Sigmoid colon (tissue), 7 donors: ENCODE measurements at regions of chr10 and their contacts with region 1.

Region 1: DNA sequence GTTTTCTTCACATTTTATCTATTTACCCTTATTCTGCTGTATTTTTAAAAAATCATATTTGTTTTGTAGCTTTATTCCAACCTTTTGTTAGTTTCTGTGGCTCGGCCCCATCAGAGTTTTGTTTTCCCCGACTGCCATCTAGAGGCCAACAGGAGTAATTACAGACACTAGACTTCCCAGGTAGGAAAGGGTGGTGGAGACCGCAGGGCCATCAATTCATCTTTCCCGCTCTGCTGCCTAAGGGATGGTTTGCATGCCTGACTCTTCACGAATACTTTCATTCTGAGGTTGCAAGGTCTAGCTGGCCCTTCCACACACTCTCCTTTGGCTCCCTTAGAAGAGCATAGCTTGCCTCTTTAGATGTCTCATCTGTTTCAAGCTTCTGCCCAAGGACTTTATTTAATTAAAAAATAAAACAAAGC is 38.3 kb downstream of the LYZL2 start:
- DNase-seq: no peak
- H3K4me3 ChIP-seq: no peak overlapping the region
- H3K27ac ChIP-seq: no peak overlapping the region
- H3K4me1 ChIP-seq: no peaks in the 10 kb centered on the region
- H3K27me3 ChIP-seq: no peaks in the 10 kb centered on the region
- CTCF ChIP-seq: peak; percentile 52 to 82 (median 80)
- EP300 ChIP-seq: no peak
- POLR2A ChIP-seq: no peak

Region 2: GRCh38 chr10:30392564-30392990 is 198.7 kb before region 1 on chr10:
- intact Hi-C with region 1: loop called (anchors 1 kb)
- DNase-seq: peak; percentile 86
- H3K4me3 ChIP-seq: peak overlapping the region in 2 of 4 donors; percentile 15 to 28
- H3K27ac ChIP-seq: no peak overlapping the region
- H3K4me1 ChIP-seq: peaks cover 0 to 7% (median 2%) of the 10 kb centered on the region in 4 donors
- H3K27me3 ChIP-seq: no peaks in the 10 kb centered on the region
- CTCF ChIP-seq: peak; percentile 86 to 95 (median 90)
- EP300 ChIP-seq: no peak
- POLR2A ChIP-seq: no peak

Region 3: DNA sequence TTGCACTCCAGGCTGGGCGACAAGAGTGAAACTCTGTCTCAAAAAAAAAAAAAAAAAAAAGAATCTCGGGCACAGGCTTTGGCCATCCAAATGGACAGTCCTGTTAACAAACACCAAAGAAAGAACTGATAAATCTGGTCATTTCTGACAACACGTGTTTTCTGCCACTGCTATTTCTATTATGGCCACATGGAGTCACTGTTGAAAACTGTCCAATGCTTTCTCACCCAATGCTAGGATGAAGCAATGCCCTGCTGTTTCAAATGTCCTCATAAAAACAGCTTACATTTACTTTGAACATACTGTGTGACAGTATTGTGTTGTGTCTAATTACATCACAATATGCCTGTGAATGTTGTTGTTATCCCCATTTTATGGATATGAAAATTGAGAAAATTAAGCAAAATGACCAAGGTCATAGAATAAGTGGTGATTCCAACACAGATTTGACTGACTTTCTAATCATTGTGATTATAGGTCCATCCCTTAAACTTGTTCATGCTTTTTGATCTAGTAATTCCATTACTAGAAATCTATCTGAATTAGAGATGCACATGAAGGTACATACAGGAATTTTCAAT is 177.2 kb before region 1 on chr10:
- intact Hi-C with region 1: loop called (anchors 5 kb)
- DNase-seq: no peak
- H3K4me3 ChIP-seq: no peak overlapping the region
- H3K27ac ChIP-seq: no peak overlapping the region
- H3K4me1 ChIP-seq: no peaks in the 10 kb centered on the region
- H3K27me3 ChIP-seq: no peaks in the 10 kb centered on the region
- CTCF ChIP-seq: peak; percentile 66 to 85 (median 76)
- EP300 ChIP-seq: no peak
- POLR2A ChIP-seq: no peak

Region 4: DNA sequence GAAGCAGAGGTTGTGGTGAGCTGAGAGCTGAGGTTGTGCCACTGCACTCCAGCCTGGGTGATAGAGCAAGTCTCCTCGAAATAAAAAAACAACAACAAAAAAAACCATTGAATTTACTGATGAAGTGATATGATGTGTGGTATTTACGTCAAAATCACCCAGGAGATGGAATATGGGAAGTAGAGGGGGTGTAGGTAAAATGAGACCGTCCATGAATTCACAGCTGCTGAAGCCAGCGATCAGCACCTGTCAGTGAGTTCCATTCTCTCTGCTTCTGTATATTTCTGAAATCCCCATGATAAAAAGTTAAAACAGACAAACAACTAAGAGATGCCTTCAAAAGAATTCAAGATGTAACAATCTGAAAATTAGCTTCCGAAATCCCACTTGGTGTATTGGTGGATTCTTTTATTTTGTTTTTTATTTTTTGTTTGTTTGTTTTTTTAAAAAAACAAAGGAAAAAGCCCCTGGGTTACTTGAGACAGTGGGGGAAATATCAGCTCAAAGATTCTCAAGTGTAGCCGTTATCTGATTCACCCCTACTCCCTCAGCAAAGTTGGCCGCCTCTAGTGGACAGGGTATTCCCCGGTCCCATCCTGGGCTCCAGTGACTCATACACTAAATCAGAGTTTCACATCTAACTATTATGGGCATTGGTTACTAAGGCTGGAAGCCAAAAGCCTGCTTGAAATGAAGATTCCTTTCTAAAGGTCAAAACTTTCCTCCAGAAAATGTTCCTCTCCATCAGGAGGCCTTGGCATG is 80.9 kb before region 1 on chr10:
- intact Hi-C with region 1: no loop called
- DNase-seq: peak; percentile 75
- H3K4me3 ChIP-seq: no peak overlapping the region
- H3K27ac ChIP-seq: peak overlapping the region in 3 of 4 donors; percentile 31 to 57 (median 45)
- H3K4me1 ChIP-seq: peaks cover 0 to 13% (median 12%) of the 10 kb centered on the region in 4 donors
- H3K27me3 ChIP-seq: no peaks in the 10 kb centered on the region
- CTCF ChIP-seq: peak in 1 of 4 experiments; percentile 22
- EP300 ChIP-seq: no peak
- POLR2A ChIP-seq: no peak

Region 5: DNA sequence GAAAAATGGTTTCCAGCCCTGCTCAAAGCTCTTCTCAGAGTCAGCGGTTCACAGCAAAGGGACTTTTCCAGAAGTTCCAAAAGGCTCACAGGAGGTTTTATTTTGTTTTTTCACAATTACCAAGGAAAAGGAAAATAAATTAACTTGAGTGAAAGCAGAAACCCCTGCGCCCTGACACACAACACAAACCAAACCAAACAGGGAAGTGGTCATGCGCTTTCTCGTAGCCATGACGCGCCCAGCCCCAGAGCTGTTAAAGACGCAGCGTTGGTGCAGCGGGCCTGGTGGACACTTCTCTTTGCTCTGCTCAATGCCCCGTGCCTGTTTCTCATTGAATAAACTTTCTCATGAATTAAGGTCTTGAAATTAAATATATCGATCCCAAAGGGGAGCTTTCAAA is 172.7 kb after region 1 on chr10:
- intact Hi-C with region 1: no loop called
- DNase-seq: peak; percentile 95
- H3K4me3 ChIP-seq: peak overlapping the region in 2 of 4 donors; percentile 7 to 11
- H3K27ac ChIP-seq: peak overlapping the region in 3 of 4 donors; percentile 82 to 90 (median 87)
- H3K4me1 ChIP-seq: peaks cover 0 to 49% (median 28%) of the 10 kb centered on the region in 4 donors
- H3K27me3 ChIP-seq: no peaks in the 10 kb centered on the region
- CTCF ChIP-seq: no peak
- EP300 ChIP-seq: peak; percentile 80 to 97 (median 94)
- POLR2A ChIP-seq: no peak